ENCODE measurements at regions of chrX and their contacts with region 1.

Region 1: GRCh38 chrX:150486011-150486410 is 82.4 kb upstream of the MTM1 start:
- DNase-seq: no peak
- ATAC-seq: peak; percentile 52
- H3K4me3 Mint-ChIP-seq: no peak overlapping the region
- H3K27ac Mint-ChIP-seq: no peak overlapping the region
- H3K4me1 Mint-ChIP-seq: peaks cover 3% of the 10 kb centered on the region
- H3K27me3 Mint-ChIP-seq: no peaks in the 10 kb centered on the region
- CTCF ChIP-seq: no peak

Region 2: GRCh38 chrX:149950681-149951080 is 535.3 kb before region 1 on chrX:
- CTCF ChIA-PET with region 1: no interaction called
- POLR2A ChIA-PET with region 1: no interaction called
- intact Hi-C with region 1: loop called (anchors 1 kb)
- DNase-seq: no peak
- ATAC-seq: peak; percentile 18
- H3K4me3 Mint-ChIP-seq: no peak overlapping the region
- H3K27ac Mint-ChIP-seq: no peak overlapping the region
- H3K4me1 Mint-ChIP-seq: no peaks in the 10 kb centered on the region
- H3K27me3 Mint-ChIP-seq: no peaks in the 10 kb centered on the region
- CTCF ChIP-seq: no peak

Region 3: GRCh38 chrX:149962859-149963757 is 522.9 kb before region 1 on chrX:
- CTCF ChIA-PET with region 1: interaction called, 3 read pairs
- POLR2A ChIA-PET with region 1: no interaction called
- intact Hi-C with region 1: loop called (anchors 1 kb)
- DNase-seq: no peak
- ATAC-seq: peak; percentile 54
- H3K4me3 Mint-ChIP-seq: no peak overlapping the region
- H3K27ac Mint-ChIP-seq: no peak overlapping the region
- H3K4me1 Mint-ChIP-seq: no peaks in the 10 kb centered on the region
- H3K27me3 Mint-ChIP-seq: no peaks in the 10 kb centered on the region
- CTCF ChIP-seq: no peak

Region 4: GRCh38 chrX:150146269-150146896 is 339.6 kb before region 1 on chrX:
- CTCF ChIA-PET with region 1: no interaction called
- POLR2A ChIA-PET with region 1: no interaction called
- intact Hi-C with region 1: loop called (anchors 1 kb)
- DNase-seq: no peak
- ATAC-seq: peak; percentile 31
- H3K4me3 Mint-ChIP-seq: no peak overlapping the region
- H3K27ac Mint-ChIP-seq: no peak overlapping the region
- H3K4me1 Mint-ChIP-seq: no peaks in the 10 kb centered on the region
- H3K27me3 Mint-ChIP-seq: peaks cover 3% of the 10 kb centered on the region
- CTCF ChIP-seq: no peak

Region 5: DNA sequence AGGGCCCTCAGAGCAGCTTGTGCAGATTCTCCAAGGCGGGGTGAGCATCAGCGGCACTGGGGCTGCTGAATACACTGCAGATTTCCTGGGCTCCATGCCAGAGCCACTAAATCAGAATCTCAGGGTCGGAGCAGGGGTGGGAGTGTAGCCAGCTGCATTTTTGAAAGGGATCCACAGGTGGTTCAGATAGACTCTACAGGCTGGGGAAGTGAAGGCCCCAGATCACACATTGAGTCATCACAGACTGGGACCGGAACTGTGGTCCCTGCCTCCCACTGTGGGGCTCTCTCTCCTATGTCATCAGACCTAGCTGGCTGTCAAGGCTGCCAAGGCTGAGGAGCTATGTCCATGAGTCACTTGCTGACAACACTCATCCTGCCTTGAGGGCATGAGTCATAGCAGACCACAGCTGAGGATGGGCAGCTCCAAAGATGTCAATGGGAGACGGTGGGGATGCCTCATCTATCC is 285.2 kb before region 1 on chrX:
- CTCF ChIA-PET with region 1: no interaction called
- POLR2A ChIA-PET with region 1: no interaction called
- intact Hi-C with region 1: loop called (anchors 10 kb)
- DNase-seq: peak; percentile 15
- ATAC-seq: peak; percentile 94
- H3K4me3 Mint-ChIP-seq: no peak overlapping the region
- H3K27ac Mint-ChIP-seq: no peak overlapping the region
- H3K4me1 Mint-ChIP-seq: peaks cover 10% of the 10 kb centered on the region
- H3K27me3 Mint-ChIP-seq: no peaks in the 10 kb centered on the region
- CTCF ChIP-seq: no peak